ENCODE measurements at regions of chr14 and their contacts with region 1.

Region 1: DNA sequence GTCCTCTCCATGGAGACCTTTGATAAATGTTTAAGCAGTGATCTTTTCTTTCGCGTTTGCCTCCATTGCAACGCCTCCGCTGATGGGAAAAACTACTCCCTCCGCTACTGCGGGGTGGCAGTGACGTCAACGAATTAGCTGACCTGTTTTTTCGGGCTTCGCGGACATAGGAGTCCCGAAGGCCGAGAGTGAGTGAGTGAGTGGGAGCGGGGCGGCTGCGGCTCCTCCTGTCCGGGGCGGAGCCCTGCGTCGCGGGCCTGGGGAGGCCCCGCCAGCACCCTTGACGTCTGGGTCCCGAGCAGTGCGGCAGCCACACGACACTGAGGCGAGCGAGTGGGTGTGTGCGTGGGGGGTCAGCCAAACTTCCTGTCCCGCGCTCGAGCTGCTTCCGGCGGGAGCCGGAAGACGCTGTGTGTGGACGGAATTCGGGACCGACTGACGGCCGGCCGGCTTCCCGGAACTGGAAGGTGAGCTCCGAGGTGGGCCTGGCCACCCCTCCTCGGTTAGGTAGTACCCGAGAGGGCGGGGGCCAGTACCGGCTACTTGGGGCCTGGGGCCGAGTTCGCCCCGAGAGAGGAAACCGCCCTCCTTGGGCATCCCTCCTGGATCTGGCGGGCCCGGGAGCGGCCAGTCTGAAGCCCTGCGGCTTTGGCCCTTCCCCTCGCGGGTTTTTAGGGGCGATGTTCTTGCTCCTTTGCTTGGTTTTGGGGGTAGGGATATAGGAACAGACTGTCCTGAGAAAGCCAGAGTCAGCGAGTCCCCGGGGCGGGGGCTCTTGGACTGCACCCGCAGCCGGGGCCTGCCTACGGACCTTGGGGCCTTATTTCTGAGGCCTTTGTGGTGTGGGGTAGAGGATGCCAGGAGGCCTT is at the start of gene ZNF410:
- DNase-seq: peak; percentile 96
- H3K4me3 Mint-ChIP-seq: peak within 1 kb of the TSS; percentile 84
- H3K27ac Mint-ChIP-seq: peak within 1 kb of the TSS; percentile 99
- H3K4me1 Mint-ChIP-seq: peaks cover 38% of the 10 kb centered on the region
- H3K27me3 Mint-ChIP-seq: no peaks in the 10 kb centered on the region
- total RNA-seq, gene ZNF410: 62.7 and 70.2 TPM in 2 replicates

Region 2: DNA sequence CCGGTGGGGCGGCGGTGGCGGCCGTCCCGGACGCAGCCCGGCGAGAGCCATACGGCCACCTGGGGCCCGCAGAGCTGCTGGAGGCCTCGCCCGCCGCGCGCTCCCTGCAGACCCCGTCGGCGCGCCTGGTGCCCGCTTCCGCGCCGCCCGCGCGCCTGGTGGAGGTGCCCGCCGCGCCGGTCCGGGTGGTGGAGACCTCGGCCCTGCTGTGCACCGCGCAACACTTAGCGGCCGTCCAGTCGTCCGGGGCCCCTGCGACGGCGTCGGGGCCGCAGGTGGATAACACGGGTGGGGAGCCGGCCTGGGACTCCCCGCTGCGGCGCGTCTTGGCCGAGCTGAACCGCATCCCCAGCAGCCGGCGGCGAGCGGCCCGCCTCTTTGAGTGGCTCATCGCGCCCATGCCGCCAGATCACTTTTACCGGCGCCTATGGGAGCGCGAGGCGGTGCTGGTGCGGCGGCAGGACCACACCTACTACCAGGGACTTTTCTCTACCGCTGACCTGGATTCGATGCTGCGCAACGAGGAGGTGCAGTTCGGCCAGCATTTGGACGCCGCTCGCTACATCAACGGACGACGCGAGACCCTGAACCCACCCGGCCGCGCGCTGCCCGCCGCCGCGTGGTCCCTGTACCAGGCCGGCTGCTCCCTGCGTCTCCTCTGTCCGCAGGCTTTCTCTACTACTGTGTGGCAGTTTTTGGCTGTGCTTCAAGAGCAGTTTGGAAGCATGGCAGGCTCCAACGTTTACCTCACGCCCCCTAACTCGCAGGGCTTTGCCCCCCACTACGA is 395.2 kb before region 1 on chr14:
- intact Hi-C with region 1: loop called (anchors 5 kb)
- DNase-seq: peak; percentile 93
- H3K4me3 Mint-ChIP-seq: peak overlapping the region; percentile 89
- H3K27ac Mint-ChIP-seq: peak overlapping the region; percentile 85
- H3K4me1 Mint-ChIP-seq: peaks cover 30% of the 10 kb centered on the region
- H3K27me3 Mint-ChIP-seq: peaks cover 12% of the 10 kb centered on the region

Region 3: GRCh38 chr14:73713803-73714655 is 172.7 kb before region 1 on chr14 and contains the start of gene PNMA1:
- intact Hi-C with region 1: loop called (anchors 5 kb)
- DNase-seq: peak; percentile 96
- H3K4me3 Mint-ChIP-seq: peak within 1 kb of the TSS; percentile 92
- H3K27ac Mint-ChIP-seq: peak within 1 kb of the TSS; percentile 93
- H3K4me1 Mint-ChIP-seq: peaks cover 27% of the 10 kb centered on the region
- H3K27me3 Mint-ChIP-seq: no peaks in the 10 kb centered on the region
- total RNA-seq, gene PNMA1: 29.7 and 30.4 TPM in 2 replicates

Region 4: GRCh38 chr14:73741386-73741875 is 145.3 kb before region 1 on chr14:
- intact Hi-C with region 1: loop called (anchors 5 kb)
- DNase-seq: peak; percentile 92
- H3K4me3 Mint-ChIP-seq: peak overlapping the region; percentile 91
- H3K27ac Mint-ChIP-seq: peak overlapping the region; percentile 85
- H3K4me1 Mint-ChIP-seq: peaks cover 67% of the 10 kb centered on the region
- H3K27me3 Mint-ChIP-seq: no peaks in the 10 kb centered on the region

Region 5: DNA sequence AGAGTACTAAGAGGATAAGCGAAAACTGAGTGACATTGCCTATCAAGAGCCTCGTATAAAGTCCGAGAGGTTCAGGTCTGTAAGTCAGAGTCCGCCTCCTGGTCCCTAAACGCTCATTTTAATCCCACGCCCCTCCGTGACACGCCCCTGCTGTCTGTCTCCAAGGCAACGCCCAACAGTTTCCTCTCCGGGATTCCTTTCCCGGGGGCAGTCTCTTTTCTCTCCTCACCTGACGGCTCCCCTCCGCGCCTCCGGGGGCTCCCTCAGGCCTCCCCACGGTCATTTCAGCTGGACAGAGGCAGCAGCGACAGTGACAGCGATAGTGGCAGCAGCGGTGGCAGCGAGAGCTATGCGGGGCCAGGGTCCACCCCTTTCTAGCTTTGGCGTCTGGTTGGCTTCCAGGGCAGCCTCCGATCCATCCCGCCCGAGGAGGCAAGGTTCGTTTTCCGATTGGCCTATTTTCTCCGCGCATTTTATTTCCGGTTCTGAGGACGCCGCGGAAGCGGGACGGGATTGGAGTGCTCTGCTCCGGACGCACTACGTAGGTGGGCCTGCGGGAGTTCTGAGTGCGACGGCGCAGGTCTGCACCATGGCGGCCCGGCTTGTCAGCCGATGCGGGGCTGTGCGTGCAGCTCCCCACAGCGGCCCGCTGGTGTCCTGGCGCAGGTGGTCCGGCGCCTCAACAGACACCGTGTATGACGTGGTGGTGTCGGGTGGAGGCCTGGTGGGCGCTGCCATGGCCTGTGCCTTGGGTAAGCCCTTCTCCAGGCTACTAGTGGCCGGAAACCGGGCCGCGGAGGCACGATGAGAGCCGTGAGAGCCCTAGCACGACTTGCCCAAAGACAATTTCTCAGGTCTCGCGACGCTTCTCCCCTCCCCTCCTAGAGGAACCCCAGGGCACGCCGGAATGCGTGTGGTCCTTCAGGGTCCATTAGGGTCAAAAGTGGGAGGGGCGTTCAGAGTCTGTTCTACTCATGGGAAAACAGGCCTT is 63.4 kb after region 1 on chr14 and contains the starts of genes COQ6 and FAM161B:
- intact Hi-C with region 1: loop called (anchors 2 kb)
- DNase-seq: peak; percentile 98
- H3K4me3 Mint-ChIP-seq: peak within 1 kb of the TSS; percentile 99
- H3K27ac Mint-ChIP-seq: peak within 1 kb of the TSS; percentile 92
- H3K4me1 Mint-ChIP-seq: peaks cover 9% of the 10 kb centered on the region
- H3K27me3 Mint-ChIP-seq: no peaks in the 10 kb centered on the region
- total RNA-seq, gene COQ6: 16.6 and 20.1 TPM in 2 replicates
- total RNA-seq, gene FAM161B: 0.57 and 0.75 TPM in 2 replicates

Region 6: GRCh38 chr14:74084277-74085046 is 197.8 kb after region 1 on chr14 and contains the starts of genes ALDH6A1 and LIN52:
- intact Hi-C with region 1: loop called (anchors 2 kb)
- DNase-seq: peak; percentile 100
- H3K4me3 Mint-ChIP-seq: peak within 1 kb of the TSS; percentile 99
- H3K27ac Mint-ChIP-seq: peak within 1 kb of the TSS; percentile 97
- H3K4me1 Mint-ChIP-seq: peaks cover 35% of the 10 kb centered on the region
- H3K27me3 Mint-ChIP-seq: no peaks in the 10 kb centered on the region
- total RNA-seq, gene ALDH6A1: 10.8 and 11.8 TPM in 2 replicates
- total RNA-seq, gene LIN52: 15.2 and 21.5 TPM in 2 replicates